K562 (cell line): ENCODE measurements at regions of chr1 and their contacts with region 1.

Region 1: DNA sequence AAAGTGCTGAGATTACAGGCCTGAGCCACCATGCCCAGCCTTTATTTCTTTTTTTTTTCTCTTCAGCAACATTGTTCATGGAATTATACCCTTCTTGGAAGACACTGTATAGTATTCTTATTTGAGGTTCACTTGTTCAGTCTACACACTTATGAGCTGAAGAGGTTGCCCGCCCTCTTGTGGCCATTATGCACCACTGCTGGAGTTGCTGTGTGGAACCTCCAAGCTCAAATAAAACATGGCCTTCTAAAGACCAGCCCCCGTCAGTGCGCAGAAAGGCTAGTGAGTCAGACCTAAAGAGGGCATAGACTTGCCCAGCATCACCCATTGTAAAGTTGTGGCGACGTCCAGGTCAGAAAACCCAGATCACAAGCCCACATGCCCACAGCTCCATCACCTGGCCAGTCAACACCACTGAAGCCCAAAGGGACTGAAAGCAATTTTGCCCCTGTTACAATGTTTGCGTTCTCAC is 20.4 kb downstream of the LURAP1 start:
- DNase-seq: peak; percentile 69 to 91 (median 77)
- ATAC-seq: peak; percentile 97
- H3K4me3 ChIP-seq: no peak overlapping the region
- H3K27ac ChIP-seq: no peak overlapping the region
- H3K4me1 ChIP-seq: peaks cover 0 to 5% of the 10 kb centered on the region in 2 experiments; a peak in 2 of 5 replicates
- H3K27me3 ChIP-seq: no peaks in the 10 kb centered on the region
- CTCF ChIP-seq: peak; percentile 95 to 99 (median 97)
- EP300 ChIP-seq: no peak
- POLR2A ChIP-seq: no peak
- RAD21 ChIP-seq: peak; percentile 90 to 94

Region 2: DNA sequence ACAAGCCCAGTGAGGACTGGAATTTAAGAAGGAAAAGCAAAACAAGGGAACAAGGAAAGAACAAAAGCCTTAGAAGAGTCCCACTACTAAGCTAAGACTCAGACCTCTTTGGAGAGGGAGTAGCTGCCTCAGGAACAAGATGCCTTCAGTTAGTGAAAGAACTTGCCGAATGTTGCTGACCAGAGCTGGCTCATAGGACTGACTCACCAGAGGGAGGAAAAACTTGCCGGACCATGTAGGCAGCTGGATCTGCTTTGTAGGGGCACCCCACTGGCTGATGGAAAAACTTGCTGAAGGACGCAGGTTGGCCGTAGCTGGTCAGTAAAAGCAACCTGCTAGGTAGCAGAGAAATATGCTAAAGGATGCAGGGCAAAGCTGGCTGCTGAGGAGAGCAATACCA is 1001.8 kb before region 1 on chr1:
- CTCF ChIA-PET with region 1: no interaction called
- POLR2A ChIA-PET with region 1: no interaction called
- in situ Hi-C with region 1: no loop called
- intact Hi-C with region 1: loop called (anchors 5 kb)
- DNase-seq: no peak
- ATAC-seq: no peak; the same call in 1 of the 3 replicates
- H3K4me3 ChIP-seq: no peak overlapping the region
- H3K27ac ChIP-seq: no peak overlapping the region
- H3K4me1 ChIP-seq: no peaks in the 10 kb centered on the region
- H3K27me3 ChIP-seq: peaks cover 27 to 31% of the 10 kb centered on the region in 2 experiments
- CTCF ChIP-seq: no peak
- EP300 ChIP-seq: no peak
- POLR2A ChIP-seq: no peak
- RAD21 ChIP-seq: no peak

Region 3: DNA sequence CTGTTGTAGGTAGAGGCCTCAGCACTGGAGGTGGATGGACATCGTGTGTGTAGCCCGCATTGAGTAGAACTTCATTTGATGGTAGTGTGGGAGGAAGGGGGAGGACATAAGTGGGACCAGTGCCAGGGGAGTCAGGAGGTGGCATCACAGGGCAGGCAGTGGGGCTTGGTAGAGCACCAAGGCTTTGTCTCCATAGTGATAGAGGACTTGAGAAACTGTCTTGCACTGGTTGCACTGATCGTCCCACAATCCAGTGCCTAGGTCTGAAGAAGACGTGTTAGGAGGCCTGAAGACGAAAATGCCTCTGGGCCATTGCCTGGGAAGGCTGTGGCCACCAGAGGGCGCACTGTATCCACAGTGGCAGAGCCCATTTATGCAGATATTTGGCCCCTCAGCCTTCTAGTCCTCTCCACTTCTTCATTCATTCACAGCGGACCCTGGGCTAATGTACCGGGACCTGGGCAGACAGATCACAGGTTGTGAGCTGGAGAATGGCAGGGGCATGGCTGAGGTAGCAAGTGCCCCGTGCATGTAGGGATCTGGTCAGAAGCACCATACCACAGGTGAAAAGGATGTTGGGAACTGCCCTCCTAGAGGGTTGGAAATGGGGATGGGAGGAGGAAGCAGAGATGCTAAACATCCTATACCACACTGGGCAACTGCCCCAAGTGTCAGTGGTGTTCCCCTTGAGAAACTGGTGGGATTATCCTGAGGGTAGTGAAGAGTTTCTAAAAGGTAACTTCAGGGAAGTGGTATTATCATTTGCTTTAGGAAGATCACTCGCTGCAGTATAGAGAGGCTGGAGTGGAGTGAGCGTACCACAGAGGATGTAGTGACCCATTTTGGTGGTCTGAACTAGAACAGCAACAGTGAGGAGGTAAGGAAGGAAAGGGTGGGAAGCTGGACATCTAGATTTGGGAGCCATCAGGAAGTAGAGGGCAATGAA is 186.3 kb before region 1 on chr1:
- CTCF ChIA-PET with region 1: interaction called, 32 read pairs
- POLR2A ChIA-PET with region 1: interaction called, 3 read pairs
- in situ Hi-C with region 1: no loop called
- intact Hi-C with region 1: loop called (anchors 1 kb)
- DNase-seq: peak; percentile 87 to 92 (median 88)
- ATAC-seq: peak; percentile 95
- H3K4me3 ChIP-seq: no peak overlapping the region
- H3K27ac ChIP-seq: no peak overlapping the region; the same call in 2 of the 3 replicates
- H3K4me1 ChIP-seq: peaks cover 3 to 12% of the 10 kb centered on the region in 2 experiments; a peak in 4 of 5 replicates
- H3K27me3 ChIP-seq: no peaks in the 10 kb centered on the region
- CTCF ChIP-seq: peak; percentile 97 to 99 (median 99)
- EP300 ChIP-seq: no peak
- POLR2A ChIP-seq: peak; percentile 71
- RAD21 ChIP-seq: peak; percentile 100

Region 4: GRCh38 chr1:46179138-46180081 is 44.1 kb before region 1 on chr1:
- CTCF ChIA-PET with region 1: interaction called, 44 read pairs
- POLR2A ChIA-PET with region 1: interaction called, 19 read pairs
- in situ Hi-C with region 1: no loop called
- intact Hi-C with region 1: loop called (anchors 1 kb)
- DNase-seq: peak; percentile 91 to 92 (median 92)
- ATAC-seq: peak; percentile 95
- H3K4me3 ChIP-seq: no peak overlapping the region
- H3K27ac ChIP-seq: no peak overlapping the region
- H3K4me1 ChIP-seq: peaks cover 22 to 23% of the 10 kb centered on the region in 2 experiments
- H3K27me3 ChIP-seq: no peaks in the 10 kb centered on the region
- CTCF ChIP-seq: peak; percentile 95 to 98 (median 96)
- EP300 ChIP-seq: no peak
- POLR2A ChIP-seq: no peak
- RAD21 ChIP-seq: peak; percentile 100

Region 5: DNA sequence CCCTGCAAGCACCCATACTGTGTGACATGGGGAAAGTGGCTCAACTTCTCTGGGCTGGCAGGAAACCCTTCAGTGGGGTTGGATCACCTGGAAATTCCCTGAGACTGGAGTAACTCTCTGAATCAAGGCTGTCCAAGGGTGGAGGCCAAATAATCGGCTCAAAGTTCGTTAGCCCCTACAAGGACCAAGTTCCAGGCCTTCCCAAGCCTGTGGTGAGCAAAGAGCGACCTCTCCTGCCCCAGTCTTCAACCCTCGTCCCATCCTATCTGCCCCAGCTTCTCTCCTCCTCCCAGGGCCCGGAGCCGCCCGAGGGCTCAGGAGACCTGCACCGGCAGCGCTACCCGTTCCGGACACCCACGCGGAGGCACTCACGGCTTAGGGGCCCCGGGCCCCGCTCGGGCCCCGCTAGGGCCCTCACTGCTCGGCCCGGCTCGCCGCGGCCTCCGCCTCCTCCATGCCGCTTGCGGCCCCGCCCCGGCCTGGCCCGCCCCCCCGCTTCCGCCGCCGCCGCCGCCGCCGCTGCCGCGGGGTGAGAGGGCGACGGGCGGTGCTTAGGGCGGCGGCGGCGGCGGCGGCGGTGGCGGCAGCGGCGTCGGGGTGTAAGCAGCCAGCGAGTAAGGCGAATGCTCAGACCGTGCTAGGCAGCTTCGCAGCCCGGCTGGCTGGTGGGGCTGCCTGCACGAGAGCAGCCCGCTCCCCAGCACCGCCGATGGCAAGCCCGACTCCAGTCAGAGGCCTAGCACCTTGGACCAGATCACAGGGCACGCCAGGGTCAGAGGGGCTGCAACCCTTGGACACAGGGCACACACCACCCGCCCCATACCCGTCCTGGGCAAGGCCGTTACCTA is 25.3 kb before region 1 on chr1 and contains the start of gene POMGNT1:
- CTCF ChIA-PET with region 1: no interaction called
- POLR2A ChIA-PET with region 1: interaction called, 6 read pairs
- in situ Hi-C with region 1: no loop called
- intact Hi-C with region 1: loop called (anchors 2 kb)
- DNase-seq: peak; percentile 83 to 98 (median 96)
- ATAC-seq: peak; percentile 89
- H3K4me3 ChIP-seq: peak within 1 kb of the TSS; percentile 83
- H3K27ac ChIP-seq: peak within 1 kb of the TSS; percentile 84
- H3K4me1 ChIP-seq: peaks cover 24 to 32% of the 10 kb centered on the region in 2 experiments
- H3K27me3 ChIP-seq: no peaks in the 10 kb centered on the region
- CTCF ChIP-seq: peak; percentile 32 to 59 (median 56); a peak in 5 of 6 replicates
- EP300 ChIP-seq: no peak
- POLR2A ChIP-seq: peak; percentile 85
- RAD21 ChIP-seq: peak in 1 of 2 experiments; percentile 66; a peak in 3 of 4 replicates
- polyA plus RNA-seq, gene POMGNT1: 14.1 to 27.9 TPM

Region 6: GRCh38 chr1:46236882-46237281 is 13.4 kb after region 1 on chr1:
- CTCF ChIA-PET with region 1: no interaction called
- POLR2A ChIA-PET with region 1: interaction called, 12 read pairs
- in situ Hi-C with region 1: no loop called
- intact Hi-C with region 1: no loop called
- DNase-seq: no peak
- ATAC-seq: no peak
- H3K4me3 ChIP-seq: no peak overlapping the region
- H3K27ac ChIP-seq: no peak overlapping the region
- H3K4me1 ChIP-seq: no peaks in the 10 kb centered on the region
- H3K27me3 ChIP-seq: no peaks in the 10 kb centered on the region
- CTCF ChIP-seq: no peak
- EP300 ChIP-seq: no peak
- POLR2A ChIP-seq: no peak
- RAD21 ChIP-seq: no peak

Region 7: DNA sequence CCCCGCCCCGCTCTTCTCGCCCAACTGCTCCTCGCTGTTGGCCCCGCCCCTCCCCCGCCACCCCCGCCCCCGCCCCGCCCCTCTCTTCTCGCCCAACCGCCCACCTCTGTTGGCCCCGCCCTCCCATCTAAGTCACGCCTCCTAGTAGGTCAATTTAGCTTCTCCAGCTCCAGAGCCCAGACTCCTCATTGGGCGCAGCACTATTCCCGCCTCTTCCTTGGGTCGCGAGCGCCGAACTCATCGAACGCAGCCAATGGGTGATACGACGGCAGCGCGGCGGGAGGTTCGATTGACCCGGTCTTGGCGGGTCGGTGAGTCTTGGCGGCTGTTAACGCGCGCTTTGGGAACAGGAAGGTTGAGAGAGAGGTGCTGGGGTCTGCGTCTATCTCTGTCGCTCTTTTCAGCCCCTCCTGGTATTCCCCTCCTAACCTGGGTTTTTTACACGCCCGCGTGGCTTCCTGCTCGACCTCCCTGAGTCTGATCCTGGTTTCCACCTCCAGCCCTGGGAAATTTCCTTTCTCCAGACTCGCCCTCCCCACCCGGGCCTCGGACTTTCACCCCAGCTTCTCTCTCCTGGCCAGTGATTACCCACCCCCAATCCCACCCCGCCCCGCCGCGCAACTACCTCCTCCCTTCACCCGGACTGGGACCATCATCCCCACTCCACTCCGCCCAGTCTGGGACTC is 24.1 kb after region 1 on chr1 and contains the start of gene RAD54L:
- CTCF ChIA-PET with region 1: no interaction called
- POLR2A ChIA-PET with region 1: interaction called, 12 read pairs
- in situ Hi-C with region 1: no loop called
- intact Hi-C with region 1: no loop called
- DNase-seq: peak; percentile 98 to 100 (median 98)
- ATAC-seq: peak; percentile 94
- H3K4me3 ChIP-seq: peak within 1 kb of the TSS; percentile 68
- H3K27ac ChIP-seq: peak within 1 kb of the TSS; percentile 91
- H3K4me1 ChIP-seq: peaks cover 22 to 40% of the 10 kb centered on the region in 2 experiments; a peak in 4 of 5 replicates
- H3K27me3 ChIP-seq: no peaks in the 10 kb centered on the region
- CTCF ChIP-seq: no peak
- EP300 ChIP-seq: peak; percentile 37
- POLR2A ChIP-seq: peak; percentile 97
- RAD21 ChIP-seq: no peak
- polyA plus RNA-seq, gene RAD54L: 37.1 to 92.3 TPM